Heart right ventricle (tissue), 16 donors: ENCODE measurements at regions of chr15 and their contacts with region 1.

Region 1: DNA sequence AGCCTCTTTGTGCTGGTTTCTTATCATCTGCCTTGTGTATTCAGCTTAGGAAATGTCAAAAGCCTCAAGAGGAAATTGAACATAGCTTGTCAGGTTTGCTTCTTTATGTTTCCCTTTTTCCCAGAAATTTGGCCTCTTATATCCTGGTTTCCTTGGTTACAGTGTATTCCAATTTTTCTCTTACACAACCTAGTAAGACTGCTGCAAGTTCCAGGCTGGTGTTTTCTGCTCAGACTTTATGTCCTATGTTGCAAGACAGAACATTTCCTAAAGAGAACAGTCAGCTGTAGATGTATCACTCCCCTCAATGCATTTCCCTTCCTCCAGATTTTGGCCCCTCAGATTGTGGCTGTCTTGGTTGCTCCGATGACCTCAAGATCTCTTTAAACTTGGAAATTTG is 102.5 kb downstream of the SH3GL3 start:
- DNase-seq: no peak
- ATAC-seq: no peak
- H3K4me3 ChIP-seq: no peak overlapping the region
- H3K27ac ChIP-seq: no peak overlapping the region
- H3K4me1 ChIP-seq: no peaks in the 10 kb centered on the region
- H3K27me3 ChIP-seq: peaks cover 0 to 33% (median 6%) of the 10 kb centered on the region in 7 donors
- CTCF ChIP-seq: no peak

Region 2: GRCh38 chr15:83498801-83499200 is 50.8 kb before region 1 on chr15:
- intact Hi-C with region 1: loop called in 1 of 10 experiments (anchors 10 kb)
- DNase-seq: no peak
- ATAC-seq: no peak
- H3K4me3 ChIP-seq: no peak overlapping the region
- H3K27ac ChIP-seq: no peak overlapping the region
- H3K4me1 ChIP-seq: no peaks in the 10 kb centered on the region
- H3K27me3 ChIP-seq: no peaks in the 10 kb centered on the region
- CTCF ChIP-seq: no peak